Mucosa of descending colon (tissue), 3 donors: ENCODE measurements at regions of chr2 and their contacts with region 1.

Region 1: GRCh38 chr2:211745295-211746097 is 793.1 kb downstream of the ERBB4 start:
- DNase-seq: peak in 2 of 3 donors; percentile 27 to 45
- ATAC-seq: peak; percentile 74
- H3K4me3 ChIP-seq: no peak overlapping the region
- H3K4me1 ChIP-seq: no peaks in the 10 kb centered on the region
- CTCF ChIP-seq: peak; percentile 48

Region 2: DNA sequence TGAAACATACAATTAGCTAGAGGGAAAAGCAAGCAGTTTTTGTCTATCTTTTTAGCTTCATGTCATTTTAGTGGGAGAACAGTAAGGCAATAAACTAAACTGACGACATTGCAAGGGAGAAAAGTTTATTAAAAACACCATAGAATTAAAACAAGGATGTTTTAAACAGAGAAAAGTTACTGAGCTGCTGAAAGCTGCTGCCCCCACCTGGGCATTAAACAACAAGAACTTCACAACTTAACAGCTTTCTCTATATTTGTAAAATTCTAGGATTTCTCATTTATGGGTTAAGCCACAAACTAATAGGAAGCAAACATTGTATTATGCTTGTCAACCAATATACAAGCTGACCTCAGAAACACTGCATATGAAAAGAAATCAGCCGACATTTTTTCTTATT is 504.0 kb after region 1 on chr2:
- intact Hi-C with region 1: no loop called
- DNase-seq: no peak
- ATAC-seq: no peak
- H3K4me3 ChIP-seq: no peak overlapping the region
- H3K4me1 ChIP-seq: no peaks in the 10 kb centered on the region
- CTCF ChIP-seq: no peak

Region 3: GRCh38 chr2:212580117-212580516 is 834.6 kb after region 1 on chr2:
- intact Hi-C with region 1: loop called in 1 of 2 experiments (anchors 10 kb)
- DNase-seq: no peak
- ATAC-seq: no peak
- H3K4me3 ChIP-seq: no peak overlapping the region
- H3K4me1 ChIP-seq: no peaks in the 10 kb centered on the region
- CTCF ChIP-seq: no peak